CD14-positive monocyte (primary cell): ENCODE measurements at regions of chr1 and their contacts with region 1.

Region 1: DNA sequence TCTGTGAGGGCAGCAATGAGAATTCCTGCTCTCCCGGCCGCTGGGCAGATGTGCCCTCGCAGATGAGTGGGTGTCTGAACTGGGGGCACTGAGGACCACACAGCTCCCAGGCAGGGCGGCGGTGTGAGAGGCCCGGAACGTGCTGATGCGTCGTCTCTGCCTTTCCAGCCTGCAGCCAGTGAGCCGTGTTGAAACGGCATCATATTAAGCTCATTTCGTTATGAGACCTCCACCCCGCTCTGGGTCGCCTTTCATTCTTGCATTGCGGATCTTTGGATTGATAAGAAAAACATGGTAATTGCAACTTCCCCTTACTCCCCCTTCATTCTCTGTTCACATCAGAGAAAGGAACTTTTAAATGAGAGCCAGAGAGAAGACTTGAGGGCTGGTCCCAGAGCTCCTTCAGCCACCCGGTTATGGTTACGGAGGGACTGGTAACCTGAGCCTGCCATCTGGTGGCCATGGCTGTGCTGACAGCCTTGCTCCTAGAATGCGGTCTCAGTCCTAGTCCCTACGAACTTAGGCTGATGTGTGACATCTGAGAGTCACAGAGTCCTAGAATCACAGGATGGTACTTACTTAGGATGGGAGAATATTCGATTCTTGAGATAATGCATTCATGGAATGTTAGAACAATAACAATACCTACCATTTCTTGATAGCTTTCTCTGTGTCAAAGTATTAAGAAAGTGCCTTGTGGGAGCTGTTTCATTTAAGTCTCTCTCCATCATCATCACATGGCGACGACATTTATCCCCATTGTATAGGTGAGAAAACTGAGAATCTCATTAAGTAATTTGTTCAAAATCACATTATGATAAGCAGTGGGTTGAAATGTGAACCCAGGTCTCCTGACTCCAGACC is 271.0 kb downstream of the TRABD2B start:
- DNase-seq: peak; percentile 12 to 41 (median 38)
- H3K4me3 ChIP-seq: no peak overlapping the region
- H3K4me3 Mint-ChIP-seq: peak overlapping the region in 1 of 2 donors; percentile 80
- H3K27ac ChIP-seq: no peak overlapping the region
- H3K27ac Mint-ChIP-seq: no peak overlapping the region
- H3K4me1 ChIP-seq: no peaks in the 10 kb centered on the region
- H3K4me1 Mint-ChIP-seq: peaks cover 10% of the 10 kb centered on the region
- H3K27me3 ChIP-seq: peaks cover 24 to 31% of the 10 kb centered on the region in 2 donors
- H3K27me3 Mint-ChIP-seq: peaks cover 28 to 45% (median 33%) of the 10 kb centered on the region in 3 donors
- CTCF ChIP-seq: peak; percentile 80

Region 2: GRCh38 chr1:47388891-47389238 is 337.4 kb before region 1 on chr1:
- intact Hi-C with region 1: loop called in 1 of 2 experiments (anchors 5 kb)
- DNase-seq: peak; percentile 8 to 37 (median 25)
- H3K4me3 ChIP-seq: no peak overlapping the region
- H3K4me3 Mint-ChIP-seq: peak overlapping the region in 1 of 2 donors; percentile 4
- H3K27ac ChIP-seq: no peak overlapping the region
- H3K27ac Mint-ChIP-seq: no peak overlapping the region
- H3K4me1 ChIP-seq: no peaks in the 10 kb centered on the region
- H3K4me1 Mint-ChIP-seq: no peaks in the 10 kb centered on the region
- H3K27me3 ChIP-seq: peaks cover 2 to 3% of the 10 kb centered on the region in 2 donors
- H3K27me3 Mint-ChIP-seq: peaks cover 7 to 17% (median 14%) of the 10 kb centered on the region in 3 donors
- CTCF ChIP-seq: peak; percentile 85

Region 3: DNA sequence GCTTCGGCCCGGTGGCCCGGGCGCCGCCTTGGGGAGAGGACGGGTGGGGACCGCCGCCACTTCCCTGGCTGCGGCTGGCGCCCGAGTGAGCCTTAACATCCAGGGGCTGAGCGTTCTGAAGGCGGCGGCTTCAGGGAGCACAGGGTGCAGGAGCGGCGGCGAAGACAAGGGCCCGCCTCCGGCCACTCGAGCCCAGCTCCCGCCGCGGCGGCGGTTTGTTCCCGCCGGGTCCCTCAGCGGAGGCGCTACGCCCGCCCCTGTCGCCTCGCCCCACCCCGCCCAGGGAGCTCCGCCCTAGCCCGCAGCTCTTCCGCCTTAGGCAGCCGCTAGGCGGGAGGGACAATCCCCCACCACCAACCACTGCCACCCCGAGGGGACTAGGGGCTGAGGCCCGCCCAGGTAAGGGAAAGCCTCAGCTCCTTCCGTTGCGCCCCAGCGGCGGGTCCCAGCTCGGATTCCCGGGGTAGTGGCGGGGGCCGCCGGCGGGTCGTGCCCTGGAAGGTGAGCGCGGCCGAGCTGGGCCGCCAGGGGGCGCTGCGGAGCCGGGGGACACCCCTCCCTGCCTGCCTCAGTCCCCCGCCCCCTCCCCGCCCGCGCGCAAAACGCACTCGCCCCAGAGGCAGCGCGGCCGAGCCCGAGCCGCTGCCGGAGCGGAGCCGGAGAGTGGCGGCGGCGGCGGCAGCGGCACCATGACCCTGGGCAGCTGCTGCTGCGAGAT is 288.6 kb before region 1 on chr1 and contains the start of gene FOXD2:
- intact Hi-C with region 1: loop called in 1 of 2 experiments (anchors 10 kb)
- DNase-seq: peak; percentile 77 to 81 (median 81)
- H3K4me3 ChIP-seq: peak within 1 kb of the TSS; percentile 55 to 81 (median 77)
- H3K4me3 Mint-ChIP-seq: peak within 1 kb of the TSS; percentile 85 to 93
- H3K27ac ChIP-seq: peak within 1 kb of the TSS in 1 of 2 donors; percentile 42
- H3K27ac Mint-ChIP-seq: peak within 1 kb of the TSS in 4 of 7 donors; percentile 40 to 79 (median 50)
- H3K4me1 ChIP-seq: peaks cover 32 to 55% of the 10 kb centered on the region in 2 donors
- H3K4me1 Mint-ChIP-seq: peaks cover 40% of the 10 kb centered on the region
- H3K27me3 ChIP-seq: peaks cover 72 to 81% of the 10 kb centered on the region in 2 donors
- H3K27me3 Mint-ChIP-seq: peaks cover 46 to 57% (median 46%) of the 10 kb centered on the region in 3 donors
- CTCF ChIP-seq: peak; percentile 100
- polyA plus RNA-seq, gene FOXD2: 0.03 to 0.11 TPM in 2 of 3 donors, not detected in the other

Region 4: GRCh38 chr1:47710329-47711071 is 15.7 kb before region 1 on chr1:
- intact Hi-C with region 1: no loop called
- DNase-seq: peak; percentile 23 to 48 (median 28)
- H3K4me3 ChIP-seq: no peak overlapping the region
- H3K4me3 Mint-ChIP-seq: peak overlapping the region in 1 of 2 donors; percentile 70
- H3K27ac ChIP-seq: no peak overlapping the region
- H3K27ac Mint-ChIP-seq: no peak overlapping the region
- H3K4me1 ChIP-seq: peaks cover 9 to 15% of the 10 kb centered on the region in 2 donors
- H3K4me1 Mint-ChIP-seq: peaks cover 14% of the 10 kb centered on the region
- H3K27me3 ChIP-seq: peaks cover 48 to 93% of the 10 kb centered on the region in 2 donors
- H3K27me3 Mint-ChIP-seq: peaks cover 76 to 82% (median 77%) of the 10 kb centered on the region in 3 donors
- CTCF ChIP-seq: peak; percentile 94

Region 5: DNA sequence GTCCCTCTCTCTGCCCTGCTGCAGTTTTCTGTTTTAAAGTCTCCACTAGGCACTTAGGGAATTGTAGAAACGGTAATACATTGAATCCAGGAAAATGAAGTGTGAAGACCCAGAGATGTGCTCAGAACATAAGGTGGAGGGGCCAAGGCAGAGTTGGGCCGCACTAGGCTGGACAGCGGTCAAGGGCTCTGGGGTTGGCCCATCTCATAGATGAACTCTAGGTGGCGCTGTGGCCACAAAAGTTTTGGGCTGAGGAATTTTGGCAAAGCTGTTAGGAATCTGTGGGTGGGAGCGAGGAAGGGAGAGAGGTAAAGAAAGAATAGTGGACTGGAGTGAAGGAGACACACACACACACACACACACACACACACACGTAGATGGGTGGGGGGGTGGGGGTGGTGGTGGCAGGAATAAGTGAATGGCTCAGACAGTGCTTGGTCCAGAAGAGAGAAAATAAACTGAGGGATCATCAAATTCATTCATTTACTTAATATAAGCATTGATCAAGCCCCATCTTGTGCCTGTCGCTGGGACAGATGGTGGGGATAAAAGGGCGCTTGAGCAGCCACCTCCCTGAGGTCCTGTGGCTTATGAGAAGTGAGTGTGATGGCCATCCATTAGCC is 12.4 kb after region 1 on chr1:
- intact Hi-C with region 1: no loop called
- DNase-seq: peak in 1 of 3 donors; percentile 0
- H3K4me3 ChIP-seq: no peak overlapping the region
- H3K4me3 Mint-ChIP-seq: peak overlapping the region in 1 of 2 donors; percentile 40
- H3K27ac ChIP-seq: no peak overlapping the region
- H3K27ac Mint-ChIP-seq: no peak overlapping the region
- H3K4me1 ChIP-seq: no peaks in the 10 kb centered on the region
- H3K4me1 Mint-ChIP-seq: no peaks in the 10 kb centered on the region
- H3K27me3 ChIP-seq: peaks cover 4 to 8% of the 10 kb centered on the region in 2 donors
- H3K27me3 Mint-ChIP-seq: peaks cover 9 to 22% (median 14%) of the 10 kb centered on the region in 3 donors
- CTCF ChIP-seq: peak; percentile 70